ENCODE measurements at regions of chr15 and their contacts with region 1.

Region 1: GRCh38 chr15:43070893-43071292 is 34.9 kb downstream of the UBR1 start:
- DNase-seq: no peak
- ATAC-seq: no peak
- H3K4me3 ChIP-seq: no peak overlapping the region
- H3K27ac ChIP-seq: no peak overlapping the region
- H3K4me1 ChIP-seq: no peaks in the 10 kb centered on the region
- H3K27me3 ChIP-seq: no peaks in the 10 kb centered on the region
- CTCF ChIP-seq: no peak
- POLR2A ChIP-seq: no peak

Region 2: GRCh38 chr15:42984493-42985034 is 86.3 kb before region 1 on chr15:
- in situ Hi-C with region 1: no loop called
- intact Hi-C with region 1: no loop called
- DNase-seq: no peak
- ATAC-seq: no peak
- H3K4me3 ChIP-seq: no peak overlapping the region
- H3K27ac ChIP-seq: no peak overlapping the region
- H3K4me1 ChIP-seq: no peaks in the 10 kb centered on the region
- H3K27me3 ChIP-seq: no peaks in the 10 kb centered on the region
- CTCF ChIP-seq: no peak
- POLR2A ChIP-seq: no peak

Region 3: DNA sequence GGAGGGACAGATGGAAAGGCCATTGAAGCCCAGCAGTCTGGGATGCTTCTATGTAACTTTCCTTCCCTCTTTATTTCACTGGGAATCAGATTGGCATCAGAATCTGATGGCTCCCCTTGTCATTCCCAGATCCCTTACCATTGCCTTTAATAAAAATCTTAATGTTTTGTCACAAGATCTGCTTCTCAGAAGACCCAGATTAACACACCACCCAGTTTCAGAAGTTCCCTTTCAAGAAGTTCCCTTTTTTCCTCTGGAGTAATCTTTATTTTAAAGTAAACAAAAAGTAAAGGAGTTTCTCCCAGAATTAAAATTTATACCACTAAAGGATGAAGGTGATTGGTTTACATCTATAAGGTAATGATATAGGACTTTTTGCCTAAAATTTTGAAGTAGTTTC is 41.4 kb before region 1 on chr15:
- in situ Hi-C with region 1: no loop called
- intact Hi-C with region 1: loop called (anchors 5 kb)
- DNase-seq: no peak
- ATAC-seq: no peak
- H3K4me3 ChIP-seq: no peak overlapping the region
- H3K27ac ChIP-seq: no peak overlapping the region
- H3K4me1 ChIP-seq: no peaks in the 10 kb centered on the region
- H3K27me3 ChIP-seq: no peaks in the 10 kb centered on the region
- CTCF ChIP-seq: no peak
- POLR2A ChIP-seq: no peak

Region 4: GRCh38 chr15:43133430-43134156 is 62.7 kb after region 1 on chr15 and contains the start of gene TMEM62:
- in situ Hi-C with region 1: no loop called
- intact Hi-C with region 1: no loop called
- DNase-seq: peak; percentile 67 to 83
- ATAC-seq: peak; percentile 86 to 95
- H3K4me3 ChIP-seq: peak within 1 kb of the TSS; percentile 70 to 89 (median 74)
- H3K27ac ChIP-seq: peak within 1 kb of the TSS; percentile 70 to 84 (median 79)
- H3K4me1 ChIP-seq: peaks cover 13 to 14% of the 10 kb centered on the region in 2 donors
- H3K27me3 ChIP-seq: no peaks in the 10 kb centered on the region
- CTCF ChIP-seq: peak in 2 of 5 experiments; percentile 8 to 10
- POLR2A ChIP-seq: peak; percentile 65
- total RNA-seq, gene TMEM62: 13.1 to 16.7 (median 16.3) TPM